Left ventricle myocardium superior (tissue), 1 donor: ENCODE measurements at regions of chr5 and their contacts with region 1.

Region 1: DNA sequence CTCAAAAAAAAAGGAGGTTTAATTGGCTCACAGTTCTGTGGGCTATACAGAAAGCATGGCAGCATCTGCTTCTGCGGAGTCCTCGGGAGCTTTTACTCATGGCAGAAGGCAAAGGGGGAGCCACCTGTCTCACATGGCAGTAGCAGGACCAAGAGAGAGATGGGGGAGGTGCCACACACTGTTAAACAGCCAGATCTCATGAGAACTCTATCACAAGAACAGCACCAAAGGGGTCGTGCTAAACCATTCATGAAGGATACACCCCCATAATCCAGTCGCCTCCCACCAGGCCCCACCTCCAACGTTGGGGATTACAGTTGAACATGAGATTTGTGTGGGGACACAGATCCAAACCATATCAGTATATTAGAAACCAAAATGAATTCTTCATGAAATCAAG is 28.3 kb upstream of the CXXC5 start:
- DNase-seq: no peak
- ATAC-seq: no peak

Region 2: GRCh38 chr5:139574641-139575312 is 45.1 kb before region 1 on chr5:
- intact Hi-C with region 1: loop called (anchors 10 kb)
- DNase-seq: no peak
- ATAC-seq: peak; percentile 59